HepG2 (cell line): ENCODE measurements at regions of chr6 and their contacts with region 1.

Region 1: GRCh38 chr6:37169496-37170272 is at the start of gene PIM1:
- DNase-seq: peak; percentile 98
- ATAC-seq: peak; percentile 75
- H3K4me3 ChIP-seq: peak within 1 kb of the TSS; percentile 98 to 100 (median 99)
- H3K27ac ChIP-seq: peak within 1 kb of the TSS; percentile 91
- H3K4me1 ChIP-seq: peaks cover 60% of the 10 kb centered on the region
- H3K27me3 ChIP-seq: no peaks in the 10 kb centered on the region; a peak in 1 of 5 replicates
- CTCF ChIP-seq: peak; percentile 41
- EP300 ChIP-seq: peak; percentile 56 to 95; a peak in 3 of 4 replicates
- POLR2A ChIP-seq: peak; percentile 69 to 88
- RAD21 ChIP-seq: peak; percentile 64
- total RNA-seq, gene PIM1: 19.1 and 29.4 TPM in 2 replicates

Region 2: DNA sequence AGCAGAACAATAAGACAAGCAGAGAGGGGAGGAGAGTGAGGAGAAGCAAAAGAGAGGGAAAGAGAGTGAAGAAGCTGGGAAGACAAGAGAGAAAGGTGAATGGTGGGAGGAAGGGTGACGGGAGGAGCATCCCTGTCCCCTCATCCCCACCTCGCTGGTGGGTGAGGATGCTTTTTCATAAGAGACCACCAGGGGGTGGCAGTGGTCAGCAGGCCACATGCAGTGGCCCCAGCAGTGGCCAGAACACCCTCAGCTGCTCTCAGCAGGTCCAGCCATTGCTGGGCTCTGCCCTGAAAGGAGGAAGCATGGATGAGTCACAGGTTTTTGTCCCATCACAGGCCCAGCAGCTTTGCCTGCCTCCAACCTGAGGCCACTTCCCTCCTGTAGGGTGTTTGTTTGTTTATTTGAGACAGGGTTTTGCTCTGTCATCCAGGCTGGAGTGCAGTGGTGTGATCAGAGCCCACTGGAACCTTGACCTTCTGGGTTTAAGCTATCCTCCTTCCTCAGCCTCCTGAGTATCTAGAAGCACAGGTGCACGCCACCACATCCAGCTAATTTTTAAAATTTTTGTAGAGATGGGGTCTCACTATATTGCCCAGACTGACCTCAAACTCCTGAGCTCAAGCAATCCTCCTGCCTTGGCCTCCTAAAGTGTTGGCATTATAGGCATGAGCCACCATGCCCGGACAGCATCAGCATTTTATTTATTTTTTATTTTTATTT is 140.3 kb before region 1 on chr6:
- CTCF ChIA-PET with region 1: interaction called, 30 read pairs
- POLR2A ChIA-PET with region 1: interaction called, 18 read pairs
- in situ Hi-C with region 1: loop called (anchors 10 kb)
- intact Hi-C with region 1: loop called (anchors 1 kb)
- DNase-seq: peak; percentile 84
- ATAC-seq: peak; percentile 89
- H3K4me3 ChIP-seq: no peak overlapping the region
- H3K27ac ChIP-seq: no peak overlapping the region
- H3K4me1 ChIP-seq: peaks cover 43% of the 10 kb centered on the region
- H3K27me3 ChIP-seq: peaks cover 4 to 47% of the 10 kb centered on the region in 2 experiments
- CTCF ChIP-seq: peak; percentile 97
- EP300 ChIP-seq: no peak; a peak in 1 of 4 replicates
- POLR2A ChIP-seq: no peak
- RAD21 ChIP-seq: peak; percentile 99

Region 3: DNA sequence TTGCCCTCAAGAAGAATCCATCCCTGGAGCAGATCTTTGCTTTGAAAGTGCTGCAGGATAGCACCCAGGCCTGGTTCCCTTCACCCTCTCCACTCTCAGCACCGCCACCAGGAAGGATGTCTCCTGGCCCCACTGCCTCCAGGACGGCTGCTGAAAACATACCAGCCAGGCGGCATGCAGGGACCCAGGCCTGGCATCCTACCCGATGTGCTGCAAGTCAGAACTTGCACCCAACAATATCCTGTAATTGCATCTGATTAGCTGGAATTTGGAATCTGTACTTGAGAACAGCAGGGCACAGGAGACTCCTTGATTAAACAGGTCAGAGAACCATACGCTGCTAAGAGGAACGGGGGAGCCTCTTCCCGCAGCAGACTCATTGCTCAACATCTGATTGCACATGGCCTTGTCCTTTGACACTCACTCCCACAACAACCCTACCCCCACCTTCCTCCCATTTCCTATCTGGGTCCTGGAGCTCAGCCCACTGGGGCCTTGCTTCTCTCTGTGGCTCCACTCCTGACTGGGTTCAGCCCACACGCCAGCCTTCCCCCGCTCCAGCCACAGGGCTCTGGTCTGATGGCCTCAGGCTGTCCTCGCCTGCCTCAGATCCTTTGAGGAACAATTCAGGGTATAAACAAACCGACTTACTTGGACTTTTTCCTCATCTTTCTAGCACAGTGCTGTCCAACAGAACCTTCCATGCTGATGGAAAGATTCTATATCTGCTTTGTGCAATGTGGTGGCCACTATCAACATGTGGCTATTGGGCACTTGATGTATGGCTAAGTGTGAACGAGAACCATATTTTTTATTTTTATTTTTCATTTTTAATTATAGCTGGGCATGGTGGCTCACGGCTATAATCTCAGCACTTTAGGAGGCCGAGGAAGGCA is 86.2 kb before region 1 on chr6:
- CTCF ChIA-PET with region 1: no interaction called
- POLR2A ChIA-PET with region 1: interaction called, 41 read pairs
- in situ Hi-C with region 1: no loop called
- intact Hi-C with region 1: no loop called
- DNase-seq: peak; percentile 96
- ATAC-seq: peak; percentile 96
- H3K4me3 ChIP-seq: peak overlapping the region; percentile 3 to 57 (median 15); a peak in 2 of 6 replicates
- H3K27ac ChIP-seq: peak overlapping the region; percentile 74
- H3K4me1 ChIP-seq: peaks cover 76% of the 10 kb centered on the region
- H3K27me3 ChIP-seq: no peaks in the 10 kb centered on the region
- CTCF ChIP-seq: peak; percentile 49
- EP300 ChIP-seq: peak; percentile 95 to 98
- POLR2A ChIP-seq: peak; percentile 33 to 50; a peak in 1 of 4 replicates
- RAD21 ChIP-seq: peak; percentile 66

Region 4: DNA sequence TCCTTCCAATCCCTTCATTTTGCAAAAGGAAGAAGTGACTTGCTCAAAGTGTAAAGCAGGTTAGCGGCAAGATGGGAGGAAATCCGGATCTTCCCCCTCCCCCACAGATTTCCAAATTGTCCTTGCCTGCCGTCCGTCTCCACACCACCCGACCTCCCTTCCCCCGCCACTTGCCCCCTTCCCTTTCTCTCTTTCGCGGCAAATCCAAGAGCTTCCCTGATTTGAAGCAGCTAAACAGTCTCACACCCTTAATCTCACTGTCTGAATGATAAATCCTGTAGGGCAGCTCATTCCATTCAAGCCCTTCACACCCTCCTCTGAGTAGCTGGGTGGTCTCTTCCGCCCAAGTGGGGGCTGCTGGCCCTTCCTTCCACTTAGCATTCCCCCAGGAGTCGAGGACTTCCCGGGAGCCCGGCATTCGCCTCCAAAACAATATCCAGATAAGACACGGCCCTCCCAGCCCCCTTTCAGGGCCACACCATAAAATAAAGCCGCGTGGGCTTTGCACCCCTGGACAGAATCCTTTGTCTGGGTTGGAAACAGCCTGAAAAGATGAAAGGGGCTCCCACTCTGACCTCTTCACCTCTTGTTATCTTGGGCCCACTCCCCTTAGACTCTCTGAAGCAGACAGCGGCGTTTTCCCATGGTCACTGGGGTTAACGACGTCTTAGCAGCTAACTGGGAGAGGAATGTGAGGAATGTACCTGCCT is 43.7 kb before region 1 on chr6:
- CTCF ChIA-PET with region 1: interaction called, 6 read pairs
- POLR2A ChIA-PET with region 1: interaction called, 234 read pairs
- in situ Hi-C with region 1: loop called (anchors 5 kb)
- intact Hi-C with region 1: loop called (anchors 1 kb)
- DNase-seq: peak; percentile 75
- ATAC-seq: no peak
- H3K4me3 ChIP-seq: peak overlapping the region in 2 of 3 experiments; percentile 13 to 35; a peak in 4 of 6 replicates
- H3K27ac ChIP-seq: peak overlapping the region; percentile 95
- H3K4me1 ChIP-seq: peaks cover 95% of the 10 kb centered on the region
- H3K27me3 ChIP-seq: no peaks in the 10 kb centered on the region
- CTCF ChIP-seq: no peak
- EP300 ChIP-seq: peak in 1 of 2 experiments; percentile 92; a peak in 2 of 4 replicates
- POLR2A ChIP-seq: no peak
- RAD21 ChIP-seq: no peak

Region 5: DNA sequence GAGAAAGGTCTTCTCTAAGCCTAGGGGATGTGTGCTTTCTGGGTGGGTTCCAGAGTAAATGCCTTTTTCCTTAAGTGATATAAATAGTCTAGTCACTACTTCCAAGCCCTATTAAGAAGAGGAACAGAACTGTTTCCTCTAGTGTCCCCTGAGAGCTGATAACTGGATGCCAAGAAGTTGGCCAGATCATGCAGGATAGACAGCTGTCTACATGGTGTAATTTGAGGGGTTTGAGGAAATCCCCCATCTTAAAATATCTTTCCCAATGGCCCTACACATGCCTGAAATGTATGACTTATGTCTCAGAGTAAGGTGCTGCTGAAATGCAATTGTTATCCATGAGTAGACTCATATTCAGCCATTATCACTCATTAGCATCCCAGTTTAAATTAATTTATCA is 19.9 kb before region 1 on chr6:
- CTCF ChIA-PET with region 1: interaction called, 3 read pairs
- POLR2A ChIA-PET with region 1: interaction called, 82 read pairs
- in situ Hi-C with region 1: no loop called
- intact Hi-C with region 1: loop called (anchors 2 kb)
- DNase-seq: no peak
- ATAC-seq: no peak
- H3K4me3 ChIP-seq: no peak overlapping the region
- H3K27ac ChIP-seq: no peak overlapping the region
- H3K4me1 ChIP-seq: peaks cover 84% of the 10 kb centered on the region
- H3K27me3 ChIP-seq: no peaks in the 10 kb centered on the region
- CTCF ChIP-seq: no peak
- EP300 ChIP-seq: no peak
- POLR2A ChIP-seq: no peak
- RAD21 ChIP-seq: no peak

Region 6: DNA sequence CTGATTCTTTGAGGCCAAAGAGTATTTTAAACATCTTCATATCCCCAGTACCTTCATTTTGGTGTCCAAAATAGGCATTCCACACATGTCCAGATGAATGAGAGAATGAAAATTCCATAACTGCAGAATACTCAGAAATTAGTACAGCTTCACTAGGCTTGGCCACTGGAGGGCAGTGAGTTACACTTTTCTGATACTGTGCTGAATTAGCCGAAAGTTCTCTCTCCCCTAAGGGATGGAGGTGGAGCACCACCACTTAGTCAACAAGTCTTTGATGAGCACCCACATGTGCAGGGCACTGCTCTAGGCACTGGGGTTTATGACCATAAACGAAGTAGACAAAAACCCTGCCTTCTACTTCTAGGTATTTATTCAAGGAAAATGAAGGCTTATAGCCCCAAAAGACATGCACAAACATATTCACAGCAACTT is 134.3 kb after region 1 on chr6:
- CTCF ChIA-PET with region 1: no interaction called
- POLR2A ChIA-PET with region 1: no interaction called
- in situ Hi-C with region 1: no loop called
- intact Hi-C with region 1: no loop called
- DNase-seq: peak; percentile 36
- ATAC-seq: peak; percentile 85
- H3K4me3 ChIP-seq: no peak overlapping the region
- H3K27ac ChIP-seq: no peak overlapping the region
- H3K4me1 ChIP-seq: no peaks in the 10 kb centered on the region
- H3K27me3 ChIP-seq: no peaks in the 10 kb centered on the region
- CTCF ChIP-seq: peak; percentile 73
- EP300 ChIP-seq: no peak
- POLR2A ChIP-seq: no peak
- RAD21 ChIP-seq: no peak